ENCODE measurements at regions of chr22 and their contacts with region 1.

Region 1: DNA sequence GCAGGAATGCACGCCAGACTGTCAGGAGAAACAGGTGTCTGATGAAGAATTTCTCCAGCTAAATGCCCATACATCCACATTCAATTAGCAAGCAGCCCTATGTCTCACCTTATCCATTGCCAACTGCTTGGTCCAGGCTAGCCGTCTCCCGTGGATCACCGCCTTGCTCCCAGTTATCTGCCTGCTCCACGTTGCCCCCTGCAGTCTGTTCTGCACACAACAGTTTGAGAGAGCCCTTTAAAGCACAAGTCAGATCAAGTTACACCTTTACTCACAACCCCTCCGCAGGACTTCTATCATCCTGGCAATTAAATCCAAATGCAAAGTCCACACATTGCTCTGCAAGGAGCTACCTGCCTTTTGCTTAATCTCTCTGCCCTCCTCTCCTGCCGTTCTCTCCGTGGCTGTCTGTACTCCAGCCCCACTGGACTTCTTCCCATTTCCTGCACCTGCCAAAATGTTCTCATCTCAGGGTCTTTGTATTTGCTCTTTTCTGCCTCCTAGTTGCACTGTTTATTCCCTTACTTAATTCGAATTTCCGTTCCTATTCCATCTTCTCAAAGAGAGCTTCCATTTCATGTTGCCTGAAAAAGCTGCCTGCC is 185.3 kb upstream of the LARGE1 start:
- DNase-seq: peak; percentile 53
- ATAC-seq: no peak
- H3K4me3 Mint-ChIP-seq: no peak overlapping the region
- H3K27ac Mint-ChIP-seq: no peak overlapping the region
- H3K4me1 Mint-ChIP-seq: no peaks in the 10 kb centered on the region
- H3K27me3 Mint-ChIP-seq: no peaks in the 10 kb centered on the region

Region 2: GRCh38 chr22:33524511-33525260 is 580.9 kb before region 1 on chr22:
- CTCF ChIA-PET with region 1: interaction called, 4 read pairs
- POLR2A ChIA-PET with region 1: no interaction called
- intact Hi-C with region 1: loop called in 1 of 2 experiments (anchors 5 kb)
- DNase-seq: no peak
- ATAC-seq: no peak
- H3K4me3 Mint-ChIP-seq: no peak overlapping the region
- H3K27ac Mint-ChIP-seq: no peak overlapping the region
- H3K4me1 Mint-ChIP-seq: no peaks in the 10 kb centered on the region
- H3K27me3 Mint-ChIP-seq: no peaks in the 10 kb centered on the region

Region 3: DNA sequence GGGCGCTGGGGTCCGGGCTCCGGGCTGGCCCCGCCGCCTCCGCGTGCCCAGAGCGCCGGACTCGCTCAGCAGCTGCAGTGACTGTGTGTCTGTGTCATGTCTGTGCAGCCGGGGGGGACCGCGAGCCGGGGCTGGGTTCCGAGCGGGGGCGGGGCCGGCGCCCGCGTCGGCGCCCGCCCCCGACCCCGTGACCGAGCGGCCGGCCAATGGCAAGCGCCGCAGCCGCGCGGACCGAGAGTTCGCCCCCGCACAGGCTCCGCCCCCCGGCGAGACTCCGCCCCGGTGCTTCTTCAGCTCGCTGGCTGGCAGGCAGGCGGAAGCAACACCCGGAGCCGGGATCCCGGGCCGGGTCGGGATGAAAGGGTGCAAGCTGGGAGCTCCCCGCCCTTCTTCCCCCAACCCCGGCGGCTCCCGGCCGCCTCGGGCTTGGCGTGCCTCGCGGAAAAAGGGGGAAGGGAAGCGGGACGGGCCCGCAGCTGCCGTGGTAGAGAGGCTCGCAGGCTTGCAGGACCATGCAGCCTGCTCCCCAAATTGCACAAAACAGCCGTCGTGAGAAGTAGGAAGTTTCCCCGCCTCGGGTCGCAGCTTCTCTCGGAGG is 184.5 kb before region 1 on chr22:
- CTCF ChIA-PET with region 1: no interaction called
- POLR2A ChIA-PET with region 1: no interaction called
- intact Hi-C with region 1: loop called in 1 of 2 experiments (anchors 1 kb)
- DNase-seq: peak; percentile 95
- ATAC-seq: peak; percentile 97
- H3K4me3 Mint-ChIP-seq: peak overlapping the region; percentile 60
- H3K27ac Mint-ChIP-seq: no peak overlapping the region
- H3K4me1 Mint-ChIP-seq: peaks cover 16% of the 10 kb centered on the region
- H3K27me3 Mint-ChIP-seq: peaks cover 68% of the 10 kb centered on the region

Region 4: DNA sequence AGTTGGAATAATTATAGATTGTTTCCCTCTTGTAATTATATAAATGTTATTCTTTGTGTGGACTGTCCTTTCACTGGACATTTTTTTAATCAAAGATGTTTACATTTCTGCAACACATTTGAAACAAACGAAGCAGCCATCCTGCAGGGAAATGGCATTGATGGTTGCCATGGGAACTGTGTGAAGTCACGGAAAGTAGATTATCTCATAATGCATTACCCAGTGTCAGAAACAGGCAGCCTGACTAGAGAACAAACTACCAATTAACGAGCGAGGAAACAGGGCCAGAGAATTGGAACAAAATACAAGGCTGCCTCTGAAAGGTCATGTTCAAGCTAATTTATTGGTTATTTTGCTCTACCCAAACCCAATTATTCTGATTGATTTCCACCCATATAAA is 88.4 kb before region 1 on chr22:
- CTCF ChIA-PET with region 1: no interaction called
- POLR2A ChIA-PET with region 1: no interaction called
- intact Hi-C with region 1: no loop called
- DNase-seq: no peak
- ATAC-seq: no peak
- H3K4me3 Mint-ChIP-seq: no peak overlapping the region
- H3K27ac Mint-ChIP-seq: no peak overlapping the region
- H3K4me1 Mint-ChIP-seq: no peaks in the 10 kb centered on the region
- H3K27me3 Mint-ChIP-seq: no peaks in the 10 kb centered on the region